ENCODE measurements at regions of chr9 and their contacts with region 1.

Region 1: GRCh38 chr9:35102926-35103659 is at the start of gene STOML2:
- DNase-seq: peak; percentile 75 to 95 (median 91)
- ATAC-seq: peak; percentile 98 to 99 (median 99)
- H3K4me3 ChIP-seq: peak within 1 kb of the TSS; percentile 91 to 95
- H3K4me3 Mint-ChIP-seq: peak within 1 kb of the TSS; percentile 84 to 96 (median 89)
- H3K27ac ChIP-seq: peak within 1 kb of the TSS; percentile 71
- H3K27ac Mint-ChIP-seq: peak within 1 kb of the TSS; percentile 89 to 98
- H3K4me1 ChIP-seq: peaks cover 12 to 27% of the 10 kb centered on the region in 2 experiments
- H3K4me1 Mint-ChIP-seq: peaks cover 28 to 38% (median 36%) of the 10 kb centered on the region in 3 donors
- H3K27me3 ChIP-seq: no peaks in the 10 kb centered on the region
- H3K27me3 Mint-ChIP-seq: no peaks in the 10 kb centered on the region
- total RNA-seq, gene STOML2: 35.8 to 58.2 (median 53.7) TPM

Region 2: DNA sequence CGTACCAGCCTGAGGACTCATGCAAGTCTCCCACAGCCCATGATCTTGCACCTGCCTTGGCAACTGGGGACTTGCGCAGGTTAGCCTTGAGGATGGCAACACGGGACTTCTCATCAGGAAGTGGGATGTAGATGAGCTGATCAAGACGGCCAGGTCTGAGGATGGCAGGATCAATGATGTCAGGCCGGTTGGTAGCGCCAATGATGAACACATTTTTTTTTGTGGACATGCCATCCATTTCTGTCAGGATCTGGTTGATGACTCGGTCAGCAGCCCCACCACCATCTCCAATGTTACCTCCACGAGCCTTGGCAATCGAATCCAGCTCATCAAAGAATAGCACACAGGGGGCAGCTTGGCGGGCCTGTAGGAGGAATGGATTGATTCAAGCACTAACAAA is 43.7 kb before region 1 on chr9:
- CTCF ChIA-PET with region 1: no interaction called
- POLR2A ChIA-PET with region 1: no interaction called
- DNase-seq: no peak
- ATAC-seq: no peak
- H3K4me3 ChIP-seq: no peak overlapping the region
- H3K4me3 Mint-ChIP-seq: no peak overlapping the region
- H3K27ac ChIP-seq: no peak overlapping the region
- H3K27ac Mint-ChIP-seq: no peak overlapping the region
- H3K4me1 ChIP-seq: no peaks in the 10 kb centered on the region
- H3K4me1 Mint-ChIP-seq: peaks cover 0 to 7% (median 0%) of the 10 kb centered on the region in 3 donors
- H3K27me3 ChIP-seq: no peaks in the 10 kb centered on the region
- H3K27me3 Mint-ChIP-seq: no peaks in the 10 kb centered on the region

Region 3: GRCh38 chr9:35079426-35080341 is 23.4 kb before region 1 on chr9 and contains the start of gene FANCG:
- CTCF ChIA-PET with region 1: interaction called in 1 of 2 experiments, 14 read pairs
- POLR2A ChIA-PET with region 1: interaction called in 1 of 2 experiments, 4 read pairs
- DNase-seq: peak; percentile 44 to 83 (median 65)
- ATAC-seq: peak; percentile 93 to 95 (median 94)
- H3K4me3 ChIP-seq: peak within 1 kb of the TSS; percentile 74 to 83
- H3K4me3 Mint-ChIP-seq: peak within 1 kb of the TSS; percentile 84 to 98 (median 94)
- H3K27ac ChIP-seq: peak within 1 kb of the TSS; percentile 32
- H3K27ac Mint-ChIP-seq: peak within 1 kb of the TSS; percentile 88 to 89
- H3K4me1 ChIP-seq: peaks cover 8 to 18% of the 10 kb centered on the region in 2 experiments
- H3K4me1 Mint-ChIP-seq: peaks cover 17 to 24% (median 24%) of the 10 kb centered on the region in 3 donors
- H3K27me3 ChIP-seq: no peaks in the 10 kb centered on the region
- H3K27me3 Mint-ChIP-seq: no peaks in the 10 kb centered on the region
- total RNA-seq, gene FANCG: 20.0 to 30.7 (median 28.2) TPM

Region 4: DNA sequence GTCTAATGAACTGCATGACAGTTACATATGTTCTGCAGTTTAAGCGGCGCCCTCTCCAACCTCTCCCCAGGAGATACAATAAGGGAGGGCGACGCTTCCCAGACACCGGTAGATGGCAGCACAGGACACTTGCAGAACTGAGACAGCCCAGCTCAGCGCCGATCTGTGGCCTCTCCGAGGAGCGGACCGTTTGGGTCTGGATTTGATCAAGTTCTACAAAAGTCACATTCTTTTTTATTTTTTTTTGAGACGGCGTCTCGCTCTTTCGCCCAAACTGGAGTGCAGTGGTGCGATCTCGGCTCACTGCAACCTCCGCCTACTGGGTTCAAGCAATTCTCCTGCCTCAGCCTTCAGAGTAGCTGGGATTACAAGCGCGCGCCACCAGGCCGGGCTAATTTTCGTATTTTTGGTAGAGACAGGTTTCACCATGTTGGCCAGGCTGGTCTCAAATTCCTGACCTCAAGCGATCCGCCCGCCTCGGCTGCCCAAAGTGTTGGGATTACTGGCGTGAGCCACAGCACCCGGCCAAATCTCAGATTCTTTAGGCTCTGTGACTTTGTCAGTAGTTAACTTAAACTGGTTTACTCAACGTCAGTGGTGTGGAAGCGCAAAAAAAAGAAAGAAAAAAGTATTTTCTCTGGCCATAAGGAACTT is 13.9 kb after region 1 on chr9:
- CTCF ChIA-PET with region 1: interaction called in 1 of 2 experiments, 12 read pairs
- POLR2A ChIA-PET with region 1: interaction called, 5 read pairs
- DNase-seq: peak; percentile 64 to 96 (median 85)
- ATAC-seq: peak; percentile 69 to 73 (median 70)
- H3K4me3 ChIP-seq: peak overlapping the region; percentile 68 to 81
- H3K4me3 Mint-ChIP-seq: peak overlapping the region; percentile 88 to 91 (median 90)
- H3K27ac ChIP-seq: peak overlapping the region; percentile 74
- H3K27ac Mint-ChIP-seq: peak overlapping the region; percentile 95 to 97
- H3K4me1 ChIP-seq: peaks cover 25 to 46% of the 10 kb centered on the region in 2 experiments
- H3K4me1 Mint-ChIP-seq: peaks cover 40 to 42% (median 41%) of the 10 kb centered on the region in 3 donors
- H3K27me3 ChIP-seq: peaks cover 0 to 4% of the 10 kb centered on the region in 2 experiments
- H3K27me3 Mint-ChIP-seq: peaks cover 3% of the 10 kb centered on the region in 2 donors

Region 5: DNA sequence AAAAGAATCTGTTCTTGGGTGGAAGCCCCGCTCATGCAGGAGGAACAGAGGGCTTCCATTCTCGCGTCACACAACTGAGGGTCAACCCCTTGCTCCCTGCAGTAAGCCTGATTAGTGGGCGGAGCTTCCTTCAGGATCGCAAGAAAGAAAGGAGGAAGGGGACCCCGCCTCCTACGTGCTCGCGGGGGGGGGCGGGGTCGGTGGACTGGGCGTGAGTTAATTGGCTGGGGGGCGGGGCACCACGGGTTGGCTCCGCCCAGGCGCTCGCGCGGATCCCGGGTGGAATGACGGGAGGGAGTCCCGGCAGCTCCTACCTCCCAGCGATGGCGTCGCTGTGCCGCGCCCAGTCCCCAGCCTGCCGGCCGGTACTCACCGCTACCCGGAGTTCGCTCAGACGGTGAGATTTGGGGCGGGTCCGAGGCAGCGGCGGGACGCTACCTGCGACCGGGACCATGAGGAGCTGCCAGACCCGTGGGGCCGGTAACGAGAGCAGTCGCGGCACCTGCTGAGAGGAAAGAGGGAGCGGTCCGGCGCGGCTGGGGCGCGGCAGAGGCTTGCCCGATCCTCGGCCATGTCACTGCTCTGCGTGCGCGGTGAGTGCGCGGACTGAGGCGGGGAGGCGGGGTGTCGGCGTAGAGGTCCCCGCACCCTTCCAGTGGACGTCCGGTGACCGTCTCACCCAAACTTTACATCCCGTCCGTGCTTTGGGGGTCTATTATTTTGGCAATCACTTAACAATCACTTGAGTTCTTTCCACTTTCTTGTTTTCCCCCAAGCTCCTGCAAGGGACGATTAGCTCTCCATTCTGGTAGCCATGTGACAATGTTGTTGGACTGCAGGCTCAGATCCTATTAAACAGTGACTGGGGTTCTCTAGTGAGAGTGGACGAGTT is 58.9 kb after region 1 on chr9 and contains the start of gene UNC13B:
- CTCF ChIA-PET with region 1: interaction called in 1 of 2 experiments, 4 read pairs
- POLR2A ChIA-PET with region 1: interaction called in 1 of 2 experiments, 14 read pairs
- DNase-seq: peak; percentile 15 to 80 (median 46)
- ATAC-seq: peak; percentile 89 to 92 (median 91)
- H3K4me3 ChIP-seq: peak within 1 kb of the TSS; percentile 84 to 91
- H3K4me3 Mint-ChIP-seq: peak within 1 kb of the TSS; percentile 87 to 93 (median 92)
- H3K27ac ChIP-seq: peak within 1 kb of the TSS; percentile 29
- H3K27ac Mint-ChIP-seq: peak within 1 kb of the TSS in 1 of 2 donors; percentile 73
- H3K4me1 ChIP-seq: peaks cover 0 to 15% of the 10 kb centered on the region in 2 experiments
- H3K4me1 Mint-ChIP-seq: peaks cover 13 to 33% (median 28%) of the 10 kb centered on the region in 3 donors
- H3K27me3 ChIP-seq: peaks cover 0 to 7% of the 10 kb centered on the region in 2 experiments
- H3K27me3 Mint-ChIP-seq: peaks cover 0 to 3% of the 10 kb centered on the region in 2 donors
- total RNA-seq, gene UNC13B: 0.45 to 1.2 (median 0.72) TPM

Measured in T-cell (primary cell).